Right ventricle myocardium inferior (tissue), 1 donor: ENCODE measurements at regions of chr14 and their contacts with region 1.

Region 1: DNA sequence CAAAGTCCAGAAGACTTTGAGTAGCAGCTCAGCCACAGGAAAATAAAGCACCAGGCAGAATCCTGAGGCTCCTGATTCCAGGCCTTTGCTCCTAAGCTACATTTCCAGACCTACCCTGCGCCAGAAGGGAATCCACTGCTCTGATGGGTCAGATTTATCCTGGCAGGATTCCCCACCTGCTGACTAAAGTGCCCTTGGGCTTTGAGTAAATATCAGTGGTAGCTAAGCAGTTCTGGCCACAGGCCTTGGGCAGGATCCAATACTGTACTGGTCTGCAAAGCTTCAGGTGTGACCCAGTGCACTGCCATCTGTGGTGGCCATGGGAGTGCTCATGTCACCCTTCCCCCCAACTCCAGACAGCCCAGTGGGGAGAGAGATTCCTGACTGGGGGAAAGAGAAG is 10.4 kb upstream of the ACOT1 start:
- DNase-seq: no peak
- ATAC-seq: peak; percentile 88

Region 2: DNA sequence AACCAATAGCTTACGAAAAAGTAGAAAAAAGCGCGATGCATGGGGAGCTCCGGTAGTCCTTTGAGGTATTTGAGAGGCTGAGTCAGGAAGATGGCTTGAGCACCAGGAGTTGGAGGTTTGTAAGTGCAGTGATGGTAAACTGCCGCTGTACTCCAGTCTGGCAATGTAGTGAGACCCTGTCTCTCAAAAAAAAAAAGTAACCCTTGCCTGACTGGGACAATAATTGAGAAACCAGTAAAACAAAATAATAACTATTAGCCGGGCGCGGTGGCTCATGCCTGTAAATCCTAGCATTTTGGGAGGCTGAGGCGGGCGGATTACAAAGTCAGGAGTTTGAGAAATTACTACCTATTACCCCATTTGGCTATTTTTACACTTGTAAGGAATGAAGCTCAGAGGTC is 41.8 kb after region 1 on chr14:
- intact Hi-C with region 1: loop called (anchors 5 kb)
- DNase-seq: no peak
- ATAC-seq: no peak